ENCODE measurements at regions of chr1 and their contacts with region 1.

Region 1: GRCh38 chr1:226526801-226527595 is 21.6 kb upstream of the STUM start:
- DNase-seq: peak in 1 of 10 donors; percentile 62

Region 2: DNA sequence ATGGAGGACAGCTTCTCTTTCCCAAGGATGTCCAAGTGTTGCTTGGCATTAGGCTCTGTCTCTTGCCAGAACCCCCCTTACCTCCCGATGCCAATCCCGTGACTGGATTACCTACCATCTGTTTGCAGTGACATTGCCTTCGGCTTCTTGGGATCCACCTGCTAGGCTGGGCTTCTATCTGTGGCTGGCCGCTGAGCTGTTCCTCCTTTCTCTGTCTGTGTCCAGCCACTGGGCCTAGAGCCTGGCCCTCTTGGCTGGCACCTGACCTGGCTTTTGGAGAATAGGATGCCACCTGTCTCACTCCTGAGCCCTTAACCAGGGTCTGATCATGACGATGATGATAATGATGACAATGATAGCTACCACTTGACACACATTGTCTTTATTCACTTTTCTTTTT is 20.1 kb before region 1 on chr1:
- intact Hi-C with region 1: no loop called
- DNase-seq: no peak

Region 3: DNA sequence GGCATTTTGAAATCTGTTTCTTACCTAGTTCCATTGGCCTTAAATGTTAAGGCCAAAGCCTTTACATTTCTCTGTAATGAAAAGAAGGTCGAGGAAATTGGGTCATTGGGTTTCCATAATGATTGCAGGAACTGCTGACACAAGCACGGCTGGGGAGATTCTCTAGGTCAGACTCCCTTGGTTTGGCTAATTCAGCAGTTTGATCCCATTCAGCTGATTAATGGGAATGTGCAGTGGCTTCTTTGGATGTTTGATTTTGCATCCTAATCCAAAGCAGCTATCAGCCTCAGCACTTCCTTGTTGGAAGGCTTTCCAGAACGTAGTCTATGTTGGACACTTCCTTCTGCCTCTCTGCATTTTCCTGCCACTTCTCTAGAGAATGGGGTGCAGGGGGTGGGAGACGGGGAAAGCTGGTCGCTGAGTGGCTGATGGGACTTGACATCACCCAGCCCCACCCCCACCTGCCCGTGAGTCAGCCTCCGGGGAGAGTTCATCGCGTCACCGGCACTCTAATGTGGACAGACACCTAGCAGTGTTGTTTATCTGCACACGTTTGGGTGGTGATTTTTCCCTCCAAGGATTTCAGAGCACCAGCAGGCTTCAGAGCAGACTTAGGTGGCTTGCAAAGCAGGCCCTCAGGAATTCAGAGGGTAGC is 348.8 kb after region 1 on chr1:
- intact Hi-C with region 1: loop called (anchors 5 kb)
- DNase-seq: no peak

Measured in posterior cingulate gyrus (tissue), 11 donors.